Right ventricle myocardium inferior (tissue), 1 donor: ENCODE measurements at regions of chr1 and their contacts with region 1.

Region 1: GRCh38 chr1:205658943-205659581 is 21.2 kb downstream of the SLC45A3 start:
- DNase-seq: peak; percentile 90
- ATAC-seq: peak; percentile 83

Region 2: DNA sequence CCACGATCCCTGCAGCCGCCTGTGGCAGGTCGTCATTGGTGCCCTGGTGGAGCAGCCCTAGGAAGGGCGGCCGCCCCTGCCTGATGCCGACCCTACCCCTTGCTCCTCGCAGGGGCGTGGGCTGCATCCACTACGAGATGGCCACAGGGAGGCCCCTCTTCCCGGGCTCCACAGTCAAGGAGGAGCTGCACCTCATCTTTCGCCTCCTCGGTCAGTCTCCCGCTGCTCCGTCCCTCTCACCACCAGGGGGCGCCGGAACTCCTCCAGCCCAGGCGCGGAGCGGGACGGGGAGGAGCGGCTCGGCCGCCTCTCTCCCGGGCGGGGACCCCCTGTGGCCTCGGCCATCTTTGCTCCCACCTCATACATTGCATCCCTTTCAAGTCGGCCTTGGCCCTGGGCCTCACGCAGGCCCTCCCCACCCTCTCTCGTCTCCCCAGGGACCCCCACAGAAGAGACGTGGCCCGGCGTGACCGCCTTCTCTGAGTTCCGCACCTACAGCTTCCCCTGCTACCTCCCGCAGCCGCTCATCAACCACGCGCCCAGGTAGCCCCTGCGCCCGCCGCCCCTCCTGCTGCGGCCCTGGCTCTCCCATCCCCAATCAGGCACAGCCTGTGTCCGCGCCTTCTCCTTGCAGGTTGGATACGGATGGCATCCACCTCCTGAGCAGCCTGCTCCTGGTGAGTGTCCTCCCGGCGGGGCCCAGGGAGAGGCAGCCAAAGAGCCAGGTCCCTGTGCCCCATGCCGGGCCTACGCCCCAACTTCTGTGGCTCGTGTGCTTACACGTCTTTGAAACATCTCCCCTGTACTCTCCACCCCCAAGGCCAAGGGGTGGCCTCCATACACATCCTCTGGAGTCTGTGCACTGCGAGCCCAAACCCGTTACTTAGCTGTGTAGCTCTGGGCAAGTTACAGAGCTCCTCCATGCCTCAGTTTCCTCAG is 129.9 kb before region 1 on chr1:
- intact Hi-C with region 1: loop called (anchors 5 kb)
- DNase-seq: peak; percentile 91
- ATAC-seq: peak; percentile 60

Region 3: DNA sequence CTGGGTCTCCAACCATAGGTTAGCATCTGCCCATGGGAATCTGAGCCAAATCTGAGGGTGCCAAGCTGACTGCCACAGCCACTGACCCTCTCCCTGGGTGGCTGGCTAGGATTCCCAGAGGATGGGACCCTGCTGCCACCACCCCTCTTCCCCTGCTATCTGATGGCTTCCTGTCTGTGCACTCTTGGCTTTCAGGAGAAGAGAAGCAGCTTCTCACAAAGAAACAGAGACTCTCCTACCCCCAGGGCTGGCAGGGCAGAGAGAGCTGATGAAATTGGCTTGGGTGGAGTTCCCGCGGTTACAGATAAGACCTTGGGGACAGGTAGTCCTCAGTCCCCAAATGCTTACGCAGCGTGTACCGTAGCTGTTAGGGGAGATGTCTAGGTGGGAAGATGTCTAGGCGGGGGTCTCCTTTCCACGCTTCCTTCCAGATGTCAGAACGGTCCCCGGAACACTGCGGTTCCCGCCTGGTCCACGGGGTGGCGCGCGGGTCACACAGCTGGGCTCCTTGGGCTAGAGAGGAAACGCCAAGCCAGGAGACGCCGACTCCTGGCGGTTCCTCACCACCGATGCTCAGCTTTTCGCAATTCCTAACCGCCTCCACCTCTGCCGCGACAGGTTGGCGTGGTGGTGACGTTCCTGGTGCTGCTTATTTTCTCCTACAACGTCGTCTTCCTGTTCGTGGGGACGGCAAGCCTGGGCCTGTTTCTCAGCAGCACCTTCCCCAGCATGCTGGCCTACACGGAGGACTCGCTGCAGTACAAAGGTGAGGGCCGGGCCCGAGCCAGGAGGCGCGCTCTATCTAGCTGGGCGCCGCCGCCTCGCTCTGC is 67.3 kb before region 1 on chr1:
- intact Hi-C with region 1: loop called (anchors 1 kb)
- DNase-seq: peak; percentile 94
- ATAC-seq: peak; percentile 95

Region 4: DNA sequence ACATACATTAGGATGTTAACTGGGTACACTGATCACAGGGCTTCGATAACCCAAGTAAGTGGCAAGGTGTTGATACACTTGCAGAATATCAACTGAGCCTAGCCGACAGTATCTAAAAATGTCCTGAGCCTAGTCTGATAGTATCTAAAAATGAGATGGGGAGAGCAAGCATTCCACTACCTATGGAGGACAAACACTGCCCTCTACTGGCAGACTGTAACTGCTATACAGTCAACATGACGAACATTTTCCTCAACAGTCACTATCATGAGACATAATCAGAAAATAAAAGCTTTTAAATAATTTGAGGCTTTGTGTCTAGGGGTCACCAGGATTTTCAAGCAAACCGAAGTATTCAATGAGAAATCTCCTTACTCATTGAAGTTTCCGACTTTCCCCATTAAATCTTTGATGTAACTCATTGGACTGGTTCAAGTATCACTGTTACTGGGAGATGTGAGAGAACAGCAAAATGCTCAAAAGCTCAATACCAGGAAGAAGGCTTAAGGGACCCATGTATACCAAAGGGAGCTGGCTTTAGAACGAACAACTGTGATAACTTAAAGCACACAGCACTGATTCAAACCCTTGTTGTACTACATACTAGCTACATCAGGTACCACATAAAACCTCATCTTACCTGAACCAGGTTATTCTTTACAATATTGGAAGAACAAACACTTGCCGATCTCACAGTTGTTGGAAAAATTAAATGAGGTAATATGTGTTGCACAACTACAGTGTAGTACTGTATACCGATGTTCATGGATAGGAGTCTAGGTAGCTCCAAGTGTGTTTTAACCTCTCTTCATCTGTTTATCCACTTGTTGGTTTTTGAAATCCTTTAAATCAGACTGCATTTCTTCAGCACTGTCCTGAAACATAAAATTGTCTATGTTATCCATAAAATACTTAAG is 52.3 kb after region 1 on chr1:
- intact Hi-C with region 1: loop called (anchors 1 kb)
- DNase-seq: no peak
- ATAC-seq: peak; percentile 83

Region 5: GRCh38 chr1:205750138-205751035 is 91.3 kb after region 1 on chr1 and contains the start of gene NUCKS1:
- intact Hi-C with region 1: no loop called
- DNase-seq: peak; percentile 99
- ATAC-seq: peak; percentile 90
- total RNA-seq, gene NUCKS1: 185 TPM

Region 6: DNA sequence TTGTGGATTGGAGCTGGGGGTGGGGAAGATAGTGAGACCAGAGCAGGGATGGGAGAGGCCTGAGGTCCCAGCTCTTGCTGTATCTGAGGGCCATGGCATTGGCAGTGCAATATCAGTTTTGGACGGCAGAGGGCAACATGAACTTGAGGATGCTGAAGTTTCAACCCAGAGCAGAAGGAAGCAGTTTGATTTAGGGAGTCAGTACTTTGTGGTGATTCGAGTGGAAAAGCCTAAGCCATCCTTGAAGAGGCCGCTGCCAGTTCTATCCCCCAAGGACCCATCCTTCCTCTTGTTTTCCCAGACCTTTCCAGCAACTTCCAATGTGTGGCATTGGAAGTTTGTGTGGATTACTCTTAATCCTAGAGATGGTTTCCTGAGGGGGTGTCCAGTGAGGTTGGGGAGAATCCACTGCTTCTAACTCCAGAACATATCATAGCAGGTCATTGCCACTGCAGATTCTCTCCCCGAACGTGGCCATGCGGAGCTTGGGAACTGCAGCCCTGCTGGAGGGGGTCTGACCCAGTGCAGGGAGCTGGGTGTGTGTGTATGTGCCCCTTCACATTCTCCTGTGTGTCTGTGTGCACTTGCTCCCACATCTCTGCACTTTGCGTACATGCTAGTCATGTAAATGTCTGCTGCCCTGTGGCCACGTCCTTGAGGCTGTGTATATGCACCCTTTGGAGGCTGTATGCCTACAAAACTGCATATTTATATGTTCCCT is 260.1 kb after region 1 on chr1:
- intact Hi-C with region 1: loop called (anchors 5 kb)
- DNase-seq: peak; percentile 87
- ATAC-seq: peak; percentile 53

Region 7: DNA sequence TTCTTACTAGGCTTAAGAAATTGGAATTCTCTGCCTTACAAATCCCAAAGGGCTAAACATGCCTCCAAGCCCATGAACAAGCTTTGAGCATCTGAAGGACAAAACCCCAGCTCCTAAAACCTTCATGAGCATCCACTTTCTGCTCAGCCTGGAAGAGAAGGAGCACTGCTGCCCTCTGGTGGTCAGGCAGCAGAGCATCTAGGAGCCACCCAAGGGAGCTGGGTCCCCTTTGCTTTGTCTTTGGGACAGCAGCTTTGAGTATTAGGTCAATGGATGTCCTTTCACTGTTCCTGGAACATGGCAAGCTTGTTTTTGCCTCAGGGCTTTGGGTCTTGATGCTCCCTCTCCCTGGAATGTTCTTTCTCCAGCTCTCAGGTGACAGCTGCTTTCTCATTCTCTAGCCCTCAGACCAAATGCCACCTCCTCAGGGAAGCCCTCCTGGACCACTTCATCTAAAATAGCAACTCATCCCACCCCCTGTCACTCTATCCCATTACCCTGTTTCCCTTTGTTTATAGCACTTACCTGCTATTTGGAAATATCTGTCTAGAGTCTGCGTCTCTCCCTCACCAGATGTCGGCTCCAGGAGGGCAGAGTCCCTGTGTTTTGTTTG is 318.4 kb after region 1 on chr1:
- intact Hi-C with region 1: loop called (anchors 1 kb)
- DNase-seq: no peak
- ATAC-seq: peak; percentile 77

Region 8: DNA sequence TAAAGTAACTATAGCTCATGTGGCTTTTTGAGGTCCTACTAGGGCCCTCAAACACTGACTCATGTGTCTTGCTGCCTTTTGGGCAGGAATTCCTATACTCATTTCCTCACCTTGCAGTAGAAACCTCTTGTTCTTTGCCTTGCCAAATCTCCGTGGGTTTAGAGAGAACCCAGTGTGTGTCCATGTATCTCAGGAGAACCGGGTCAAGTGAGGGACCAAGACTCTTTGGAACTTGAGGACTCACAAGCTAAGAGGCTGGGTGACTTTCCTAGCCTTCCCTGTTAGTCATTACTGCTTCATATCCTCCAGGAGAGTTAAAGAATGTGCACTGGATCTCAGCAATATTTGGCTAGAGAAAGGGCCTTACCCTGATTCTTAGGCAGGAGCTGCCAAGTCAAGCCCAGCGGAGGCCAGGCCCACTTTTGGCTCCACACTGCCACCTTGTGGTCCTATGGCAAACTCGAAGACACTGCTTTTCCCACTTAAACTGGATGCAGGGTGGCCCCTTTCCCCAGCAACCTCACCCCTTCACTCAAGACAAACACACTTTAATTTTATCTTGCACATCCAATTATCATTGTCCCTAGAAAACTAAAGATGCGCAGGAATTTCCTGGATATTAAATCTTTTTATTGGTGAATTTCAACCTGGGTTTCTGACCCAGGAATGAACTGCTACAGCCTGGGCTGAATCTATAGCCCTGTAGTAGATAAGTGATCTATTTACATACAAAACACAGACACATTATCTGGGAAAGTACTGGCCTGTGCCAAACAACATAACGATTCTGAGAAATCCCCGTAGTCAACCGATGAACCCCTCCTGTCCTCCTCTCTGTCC is 447.5 kb after region 1 on chr1:
- intact Hi-C with region 1: loop called (anchors 10 kb)
- DNase-seq: peak; percentile 90
- ATAC-seq: peak; percentile 83